Heart right ventricle (tissue), 16 donors: ENCODE measurements at regions of chr20 and their contacts with region 1.

Region 1: GRCh38 chr20:11267131-11267761 is 593.4 kb upstream of the JAG1 start:
- DNase-seq: peak; percentile 15 to 69
- ATAC-seq: peak; percentile 79 to 96 (median 93)
- H3K4me3 ChIP-seq: no peak overlapping the region
- H3K27ac ChIP-seq: peak overlapping the region in 8 of 10 donors; percentile 9 to 65 (median 47)
- H3K4me1 ChIP-seq: peaks cover 6 to 24% (median 17%) of the 10 kb centered on the region in 9 donors
- H3K27me3 ChIP-seq: no peaks in the 10 kb centered on the region
- CTCF ChIP-seq: peak in 3 of 9 donors; percentile 8 to 14 (median 12)

Region 2: DNA sequence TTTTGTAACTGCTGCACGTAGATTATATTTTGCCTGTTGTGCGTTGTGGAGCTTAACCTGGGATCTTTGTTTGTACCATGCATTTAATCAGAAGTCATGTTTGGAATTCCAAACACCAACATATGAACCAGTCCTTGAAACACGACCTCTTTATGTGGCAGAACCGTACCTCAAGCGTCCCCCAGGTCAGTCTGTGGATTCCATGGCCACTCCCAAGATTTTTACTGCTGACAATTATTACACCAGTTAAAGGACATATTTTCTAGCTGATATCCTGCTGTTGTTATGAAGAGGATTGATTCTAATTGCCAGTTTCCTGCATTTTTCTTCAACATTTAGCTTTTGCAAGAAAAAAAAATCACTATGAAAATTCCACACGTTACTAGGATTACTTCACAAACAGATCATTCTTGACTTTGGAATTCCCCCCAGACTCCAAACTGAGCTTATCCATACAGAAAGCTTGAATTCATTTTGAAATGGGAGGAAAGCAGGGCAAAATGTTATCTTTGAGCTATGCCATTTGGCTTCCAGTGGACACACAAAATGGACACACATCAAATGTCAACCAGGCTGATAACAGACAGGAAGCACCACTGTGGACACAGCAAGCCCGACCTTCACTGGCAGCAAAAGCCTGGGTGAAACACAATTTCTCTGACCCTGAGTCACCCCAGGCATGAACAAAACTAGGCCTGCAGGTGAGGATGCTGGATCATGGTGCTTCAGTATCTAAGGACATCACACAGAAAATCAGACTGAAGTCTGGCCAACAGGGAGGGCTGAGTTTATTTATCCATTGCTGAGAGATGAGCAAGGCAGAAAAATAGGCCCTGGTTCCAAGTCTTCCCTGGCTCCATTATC is 50.6 kb before region 1 on chr20:
- intact Hi-C with region 1: loop called in 2 of 10 experiments (anchors 10 kb)
- DNase-seq: no peak
- ATAC-seq: peak in 5 of 8 donors; percentile 21 to 46 (median 31)
- H3K4me3 ChIP-seq: no peak overlapping the region
- H3K27ac ChIP-seq: peak overlapping the region in 5 of 10 donors; percentile 5 to 54 (median 36)
- H3K4me1 ChIP-seq: peaks cover 5 to 25% (median 22%) of the 10 kb centered on the region in 9 donors
- H3K27me3 ChIP-seq: no peaks in the 10 kb centered on the region
- CTCF ChIP-seq: no peak

Region 3: DNA sequence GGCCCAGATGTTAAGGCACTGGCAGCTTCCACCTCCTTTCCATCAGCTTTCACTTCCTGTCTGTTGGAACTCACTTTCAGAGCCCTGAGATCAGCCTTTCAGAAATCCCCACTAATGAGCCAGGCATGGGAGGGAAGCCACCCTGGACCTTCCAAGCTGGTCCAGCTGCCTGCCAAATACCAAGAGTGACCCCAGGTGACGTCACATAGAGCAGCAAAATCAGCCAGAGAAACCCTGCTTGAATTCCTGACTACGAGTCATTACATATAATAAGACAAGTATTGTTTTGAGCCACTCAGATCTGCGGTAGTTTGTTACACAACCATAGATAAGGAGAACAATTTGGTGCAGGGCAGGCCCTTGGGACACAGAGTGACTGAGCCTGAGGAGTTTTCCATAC is 37.5 kb before region 1 on chr20:
- intact Hi-C with region 1: loop called in 1 of 10 experiments (anchors 5 kb)
- DNase-seq: peak; percentile 14 to 54
- ATAC-seq: peak; percentile 76 to 95 (median 85)
- H3K4me3 ChIP-seq: no peak overlapping the region
- H3K27ac ChIP-seq: peak overlapping the region in 7 of 10 donors; percentile 2 to 62 (median 34)
- H3K4me1 ChIP-seq: peaks cover 5 to 33% (median 15%) of the 10 kb centered on the region in 9 donors
- H3K27me3 ChIP-seq: no peaks in the 10 kb centered on the region
- CTCF ChIP-seq: no peak